Caco-2 (cell line): ENCODE measurements at regions of chr7 and their contacts with region 1.

Region 1: DNA sequence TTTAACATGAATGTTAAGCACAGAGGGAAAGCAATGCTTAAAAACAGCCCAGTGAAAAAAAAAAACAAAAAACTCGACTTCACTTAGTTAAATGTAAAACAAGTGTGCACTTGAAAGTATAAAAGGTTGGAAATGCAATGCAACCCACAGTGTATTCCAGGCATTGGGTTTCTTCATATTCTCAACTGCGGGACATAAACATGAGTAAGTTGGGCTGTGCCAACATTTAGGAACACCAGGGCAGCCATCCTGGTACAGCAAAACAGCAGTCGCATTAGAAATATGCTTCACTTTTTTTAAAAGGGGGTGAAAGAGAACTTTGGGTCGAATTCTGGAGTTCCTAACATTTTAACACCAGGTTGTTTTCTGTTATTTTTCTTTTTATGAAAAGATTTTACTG is 937 bp downstream of the STEAP1 start:
- DNase-seq: no peak
- H3K4me3 ChIP-seq: peak overlapping the region; percentile 87
- H3K4me3 Mint-ChIP-seq: peak overlapping the region; percentile 93
- H3K27ac Mint-ChIP-seq: peak overlapping the region; percentile 89
- H3K4me1 ChIP-seq: peaks cover 8% of the 10 kb centered on the region; the same call in 1 of the 2 replicates
- H3K4me1 Mint-ChIP-seq: no peaks in the 10 kb centered on the region
- H3K27me3 ChIP-seq: no peaks in the 10 kb centered on the region
- H3K27me3 Mint-ChIP-seq: no peaks in the 10 kb centered on the region
- CTCF ChIP-seq: no peak

Region 2: GRCh38 chr7:89887489-89887888 is 267.7 kb before region 1 on chr7:
- CTCF ChIA-PET with region 1: no interaction called
- POLR2A ChIA-PET with region 1: no interaction called
- intact Hi-C with region 1: no loop called
- DNase-seq: no peak
- H3K4me3 ChIP-seq: no peak overlapping the region
- H3K4me3 Mint-ChIP-seq: no peak overlapping the region
- H3K27ac Mint-ChIP-seq: no peak overlapping the region
- H3K4me1 ChIP-seq: peaks cover 7% of the 10 kb centered on the region
- H3K4me1 Mint-ChIP-seq: no peaks in the 10 kb centered on the region
- H3K27me3 ChIP-seq: no peaks in the 10 kb centered on the region
- H3K27me3 Mint-ChIP-seq: peaks cover 3% of the 10 kb centered on the region
- CTCF ChIP-seq: no peak

Region 3: DNA sequence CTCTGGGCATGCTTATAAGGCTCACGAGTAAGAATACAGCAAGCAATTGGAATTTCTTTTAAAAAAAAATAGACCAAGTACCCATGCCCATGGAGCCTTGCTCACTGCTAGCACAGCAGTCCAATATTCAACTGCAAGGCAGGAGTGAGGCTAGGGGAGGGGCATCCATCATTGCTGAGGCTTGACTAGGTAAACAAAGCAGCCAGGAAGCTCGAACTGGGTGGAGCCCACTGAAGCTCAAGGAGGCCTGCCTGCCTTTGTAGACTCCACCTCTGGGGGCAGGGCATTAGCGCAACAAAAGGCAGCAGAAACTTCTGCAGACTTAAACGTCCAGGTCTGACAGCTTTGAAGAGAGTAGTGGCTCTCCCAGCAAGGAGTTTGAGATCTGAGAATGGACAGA is 85.0 kb before region 1 on chr7:
- CTCF ChIA-PET with region 1: no interaction called
- POLR2A ChIA-PET with region 1: no interaction called
- intact Hi-C with region 1: no loop called
- DNase-seq: peak; percentile 61 to 77
- H3K4me3 ChIP-seq: no peak overlapping the region
- H3K4me3 Mint-ChIP-seq: no peak overlapping the region
- H3K27ac Mint-ChIP-seq: no peak overlapping the region
- H3K4me1 ChIP-seq: no peaks in the 10 kb centered on the region
- H3K4me1 Mint-ChIP-seq: no peaks in the 10 kb centered on the region
- H3K27me3 ChIP-seq: no peaks in the 10 kb centered on the region
- H3K27me3 Mint-ChIP-seq: peaks cover 6% of the 10 kb centered on the region
- CTCF ChIP-seq: no peak

Region 4: DNA sequence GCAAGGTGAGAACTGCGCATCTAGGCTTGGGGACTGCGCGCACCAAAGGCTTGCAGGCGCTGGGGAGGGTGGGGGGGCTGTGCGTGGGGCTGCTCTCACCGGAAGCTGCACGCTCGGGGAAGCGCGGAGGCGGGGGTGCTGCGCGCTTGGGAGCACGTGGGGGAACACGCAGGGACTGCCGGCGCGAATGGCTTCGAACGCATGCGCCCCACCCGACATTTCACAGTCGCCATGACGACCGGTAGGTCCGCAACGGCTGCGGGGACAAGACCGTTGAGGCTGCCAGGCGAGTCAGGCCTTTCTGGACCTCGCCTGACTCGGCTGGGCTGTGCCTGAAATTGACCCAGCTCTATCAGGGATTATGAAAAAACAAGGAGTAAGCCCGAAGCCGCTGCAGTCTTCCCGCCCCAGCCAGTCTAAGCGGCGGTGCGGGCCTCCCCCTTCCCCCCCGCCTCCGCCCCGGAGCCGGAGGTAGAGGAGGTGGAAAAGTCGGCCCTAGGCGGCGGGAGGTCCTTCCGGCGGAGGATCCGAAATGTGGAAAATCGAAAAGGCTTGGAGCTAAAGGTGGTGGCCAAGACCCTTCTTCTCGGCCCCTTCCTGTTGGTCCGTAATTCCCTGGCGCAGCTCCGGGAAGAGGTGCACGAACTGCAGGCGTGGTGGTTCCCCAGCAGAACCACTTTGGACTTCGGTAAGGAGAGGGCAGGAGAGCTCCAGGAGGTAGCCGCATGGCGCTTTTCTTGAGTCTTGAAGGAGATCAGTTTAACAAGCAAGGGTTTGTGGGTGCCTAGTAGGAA is 35.8 kb before region 1 on chr7:
- CTCF ChIA-PET with region 1: no interaction called
- POLR2A ChIA-PET with region 1: no interaction called
- intact Hi-C with region 1: no loop called
- DNase-seq: no peak
- H3K4me3 ChIP-seq: no peak overlapping the region
- H3K4me3 Mint-ChIP-seq: no peak overlapping the region
- H3K27ac Mint-ChIP-seq: no peak overlapping the region
- H3K4me1 ChIP-seq: no peaks in the 10 kb centered on the region
- H3K4me1 Mint-ChIP-seq: no peaks in the 10 kb centered on the region
- H3K27me3 ChIP-seq: no peaks in the 10 kb centered on the region
- H3K27me3 Mint-ChIP-seq: peaks cover 15% of the 10 kb centered on the region
- CTCF ChIP-seq: no peak

Region 5: GRCh38 chr7:90244909-90245851 is 90.0 kb after region 1 on chr7 and contains the start of gene CFAP69:
- CTCF ChIA-PET with region 1: interaction called, 3 read pairs
- POLR2A ChIA-PET with region 1: no interaction called
- intact Hi-C with region 1: loop called (anchors 1 kb)
- DNase-seq: peak; percentile 92 to 95
- H3K4me3 ChIP-seq: peak within 1 kb of the TSS; percentile 57
- H3K4me3 Mint-ChIP-seq: peak within 1 kb of the TSS; percentile 87
- H3K27ac Mint-ChIP-seq: peak within 1 kb of the TSS; percentile 91
- H3K4me1 ChIP-seq: peaks cover 40% of the 10 kb centered on the region
- H3K4me1 Mint-ChIP-seq: peaks cover 12% of the 10 kb centered on the region
- H3K27me3 ChIP-seq: no peaks in the 10 kb centered on the region
- H3K27me3 Mint-ChIP-seq: no peaks in the 10 kb centered on the region
- CTCF ChIP-seq: peak; percentile 21 to 26
- total RNA-seq, gene CFAP69: 4.8 and 7.4 TPM in 2 replicates

Region 6: DNA sequence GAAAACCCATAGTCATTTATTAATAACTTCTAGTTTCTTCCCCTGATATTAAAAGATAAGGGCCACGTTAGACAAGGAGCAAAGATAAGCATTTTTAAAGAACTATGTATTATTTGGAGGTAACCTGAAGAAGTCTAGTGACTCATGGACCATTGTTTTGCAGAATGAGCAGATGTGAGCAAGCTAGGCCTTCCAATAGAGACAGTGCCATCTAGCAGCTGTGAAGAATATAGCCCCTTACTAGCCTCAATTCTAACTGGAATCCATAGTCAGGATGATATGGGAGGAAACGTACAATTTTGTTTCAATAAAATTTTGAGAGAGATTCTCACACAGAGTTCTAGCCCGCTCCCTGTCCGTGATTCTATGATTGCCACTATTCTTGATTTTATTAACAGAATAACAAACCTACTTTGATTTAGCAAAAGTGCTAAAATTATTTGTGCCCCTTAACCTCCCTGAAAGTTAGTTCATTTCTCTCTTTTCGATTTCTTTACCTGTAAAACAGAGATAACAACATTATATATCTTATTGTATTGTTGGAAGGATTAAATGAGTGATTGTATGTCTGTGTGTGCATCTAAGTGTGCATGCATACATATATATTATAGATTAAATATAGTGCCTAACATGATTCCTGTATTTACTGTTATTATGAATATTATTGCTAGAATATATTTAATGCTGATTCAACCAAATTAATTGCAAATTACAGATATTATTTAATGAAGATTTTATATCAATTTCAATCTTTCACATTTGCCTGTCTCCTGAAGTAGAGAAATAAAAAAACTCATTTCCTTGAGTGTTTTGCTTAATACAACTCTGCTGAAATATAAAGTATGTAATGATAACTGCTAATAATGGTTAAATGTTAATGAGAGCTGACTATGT is 143.2 kb after region 1 on chr7:
- CTCF ChIA-PET with region 1: no interaction called
- POLR2A ChIA-PET with region 1: no interaction called
- intact Hi-C with region 1: loop called (anchors 1 kb)
- DNase-seq: peak; percentile 41 to 52
- H3K4me3 ChIP-seq: no peak overlapping the region
- H3K4me3 Mint-ChIP-seq: no peak overlapping the region
- H3K27ac Mint-ChIP-seq: no peak overlapping the region
- H3K4me1 ChIP-seq: peaks cover 18% of the 10 kb centered on the region
- H3K4me1 Mint-ChIP-seq: peaks cover 15% of the 10 kb centered on the region
- H3K27me3 ChIP-seq: no peaks in the 10 kb centered on the region
- H3K27me3 Mint-ChIP-seq: no peaks in the 10 kb centered on the region
- CTCF ChIP-seq: peak; percentile 67 to 84

Region 7: GRCh38 chr7:90412458-90413184 is 257.4 kb after region 1 on chr7:
- CTCF ChIA-PET with region 1: no interaction called
- POLR2A ChIA-PET with region 1: no interaction called
- intact Hi-C with region 1: loop called (anchors 1 kb)
- DNase-seq: peak; percentile 60 to 64
- H3K4me3 ChIP-seq: no peak overlapping the region
- H3K4me3 Mint-ChIP-seq: no peak overlapping the region
- H3K27ac Mint-ChIP-seq: no peak overlapping the region
- H3K4me1 ChIP-seq: no peaks in the 10 kb centered on the region
- H3K4me1 Mint-ChIP-seq: no peaks in the 10 kb centered on the region
- H3K27me3 ChIP-seq: no peaks in the 10 kb centered on the region
- H3K27me3 Mint-ChIP-seq: no peaks in the 10 kb centered on the region
- CTCF ChIP-seq: peak; percentile 49 to 56